ENCODE measurements at regions of chr12 and their contacts with region 1.

Region 1: GRCh38 chr12:84627593-84627992 is 285.0 kb downstream of the SLC6A15 start:
- DNase-seq: no peak
- ATAC-seq: no peak
- H3K4me3 ChIP-seq: no peak overlapping the region
- H3K27ac ChIP-seq: no peak overlapping the region
- H3K4me1 ChIP-seq: no peaks in the 10 kb centered on the region
- H3K27me3 ChIP-seq: no peaks in the 10 kb centered on the region
- CTCF ChIP-seq: no peak
- POLR2A ChIP-seq: no peak
- RAD21 ChIP-seq: no peak

Region 2: GRCh38 chr12:84537666-84538065 is 89.9 kb before region 1 on chr12:
- CTCF ChIA-PET with region 1: no interaction called
- POLR2A ChIA-PET with region 1: no interaction called
- dilution Hi-C with region 1: no loop called
- in situ Hi-C with region 1: no loop called
- intact Hi-C with region 1: loop called (anchors 1 kb)
- DNase-seq: no peak
- ATAC-seq: no peak
- H3K4me3 ChIP-seq: no peak overlapping the region
- H3K27ac ChIP-seq: no peak overlapping the region
- H3K4me1 ChIP-seq: no peaks in the 10 kb centered on the region
- H3K27me3 ChIP-seq: no peaks in the 10 kb centered on the region
- CTCF ChIP-seq: no peak
- POLR2A ChIP-seq: no peak
- RAD21 ChIP-seq: no peak